HCT116 (cell line): ENCODE measurements at regions of chr3 and their contacts with region 1.

Region 1: GRCh38 chr3:150220799-150221198 is 187.3 kb upstream of the TSC22D2 start:
- DNase-seq: no peak
- ATAC-seq: no peak; the same call in 1 of the 2 replicates
- H3K4me3 ChIP-seq: 0 out of 4 replicates have a peak overlapping the region, but pooled peaks of 1 of the 2 experiments have one; percentile 24
- H3K27ac ChIP-seq: no peak overlapping the region
- H3K4me1 ChIP-seq: peaks cover 0 to 9% of the 10 kb centered on the region in 2 experiments; a peak in 1 of 4 replicates
- H3K27me3 ChIP-seq: no peaks in the 10 kb centered on the region
- CTCF ChIP-seq: no peak
- POLR2A ChIP-seq: no peak
- RAD21 ChIP-seq: no peak

Region 2: DNA sequence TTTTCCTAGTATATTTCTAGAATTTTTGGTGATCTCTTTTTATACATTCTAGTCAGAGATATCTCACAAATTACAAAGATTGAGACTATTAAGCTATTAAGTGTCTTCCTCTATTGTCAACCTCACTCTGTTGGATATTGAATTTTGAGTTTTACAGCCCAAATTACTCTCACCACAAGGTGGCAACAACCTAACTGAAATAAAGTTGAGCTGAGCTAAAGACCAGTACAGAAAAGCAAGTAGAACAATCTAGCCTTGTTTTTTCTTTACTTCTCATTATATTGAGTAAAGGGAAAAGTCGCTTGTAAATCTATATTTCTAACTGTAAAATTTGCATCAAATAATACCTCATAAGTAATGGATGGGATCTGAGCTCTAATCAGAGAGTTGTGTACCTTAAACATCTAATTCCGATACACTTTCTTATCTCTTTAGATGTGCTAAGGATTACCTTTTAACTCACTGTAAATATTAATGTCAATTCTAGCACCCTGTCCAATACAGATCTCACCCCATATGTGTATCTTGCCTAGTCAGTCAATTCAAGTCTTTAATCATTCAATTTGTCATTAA is 455.0 kb before region 1 on chr3:
- CTCF ChIA-PET with region 1: interaction called, 6 read pairs
- POLR2A ChIA-PET with region 1: no interaction called
- RAD21 ChIA-PET with region 1: no interaction called
- intact Hi-C with region 1: loop called (anchors 5 kb)
- DNase-seq: no peak
- ATAC-seq: peak; percentile 79
- H3K4me3 ChIP-seq: no peak overlapping the region
- H3K27ac ChIP-seq: no peak overlapping the region
- H3K4me1 ChIP-seq: no peaks in the 10 kb centered on the region
- H3K27me3 ChIP-seq: peaks cover 3% of the 10 kb centered on the region; the same call in 1 of the 2 replicates
- CTCF ChIP-seq: peak; percentile 50 to 64 (median 56)
- POLR2A ChIP-seq: no peak
- RAD21 ChIP-seq: peak; percentile 72

Region 3: GRCh38 chr3:149936812-149937233 is 284.0 kb before region 1 on chr3:
- CTCF ChIA-PET with region 1: interaction called, 13 read pairs
- POLR2A ChIA-PET with region 1: no interaction called
- RAD21 ChIA-PET with region 1: no interaction called
- intact Hi-C with region 1: loop called (anchors 1 kb)
- DNase-seq: peak; percentile 31
- ATAC-seq: peak; percentile 90
- H3K4me3 ChIP-seq: no peak overlapping the region
- H3K27ac ChIP-seq: no peak overlapping the region
- H3K4me1 ChIP-seq: peaks cover 0 to 4% of the 10 kb centered on the region in 2 experiments; a peak in 1 of 4 replicates
- H3K27me3 ChIP-seq: no peaks in the 10 kb centered on the region
- CTCF ChIP-seq: peak; percentile 63 to 88 (median 80); a peak in 5 of 6 replicates
- POLR2A ChIP-seq: no peak
- RAD21 ChIP-seq: peak; percentile 84

Region 4: DNA sequence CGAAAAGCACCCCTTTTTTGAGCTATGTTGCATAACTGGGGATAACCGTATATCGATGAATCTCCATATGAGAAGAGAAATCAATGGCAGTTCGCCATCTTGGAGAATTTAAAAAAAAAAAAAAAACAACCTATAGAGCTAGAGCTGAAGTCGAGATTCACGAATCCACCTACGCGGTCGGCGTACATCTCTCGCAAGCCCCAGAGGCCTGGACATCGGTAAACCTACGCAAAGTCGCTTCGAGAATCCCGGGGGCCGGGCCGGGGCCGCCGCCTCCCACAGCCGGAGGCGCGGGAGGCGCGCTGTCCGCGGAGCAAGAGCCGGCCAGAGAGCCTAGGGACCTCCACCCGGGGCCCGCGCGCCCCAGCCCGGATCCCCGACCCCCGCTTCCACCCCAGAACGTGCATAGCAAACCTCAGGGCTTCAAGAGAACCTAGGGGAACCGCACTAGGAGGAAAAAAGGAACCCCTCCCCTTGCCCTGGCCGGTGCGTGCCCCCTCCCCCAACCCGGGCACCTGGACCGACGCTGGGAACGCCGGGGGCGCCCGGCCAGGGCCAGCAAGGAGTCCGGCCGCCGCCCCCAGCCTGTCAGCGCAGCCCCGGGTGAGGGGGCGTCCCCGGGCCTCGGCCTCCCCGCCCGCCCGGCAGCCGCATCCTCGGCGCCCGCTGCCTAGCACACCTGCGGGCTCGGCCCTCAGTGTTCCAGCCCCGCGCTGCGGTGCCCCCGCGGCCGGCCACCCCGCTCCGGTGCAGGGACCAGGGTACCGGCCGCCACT is 250.7 kb before region 1 on chr3:
- CTCF ChIA-PET with region 1: interaction called, 16 read pairs
- POLR2A ChIA-PET with region 1: no interaction called
- RAD21 ChIA-PET with region 1: no interaction called
- intact Hi-C with region 1: loop called (anchors 1 kb)
- DNase-seq: peak; percentile 73
- ATAC-seq: peak; percentile 58
- H3K4me3 ChIP-seq: peak overlapping the region; percentile 62 to 66
- H3K27ac ChIP-seq: peak overlapping the region; percentile 89
- H3K4me1 ChIP-seq: peaks cover 7 to 26% of the 10 kb centered on the region in 2 experiments; a peak in 3 of 4 replicates
- H3K27me3 ChIP-seq: no peaks in the 10 kb centered on the region
- CTCF ChIP-seq: no peak
- POLR2A ChIP-seq: no peak
- RAD21 ChIP-seq: no peak